ENCODE measurements at regions of chr6 and their contacts with region 1.

Region 1: GRCh38 chr6:167898673-167899311 is 72.1 kb downstream of the AFDN start:
- DNase-seq: peak in 3 of 14 experiments; percentile 25 to 36 (median 25)
- ATAC-seq: no peak
- H3K4me3 ChIP-seq: no peak overlapping the region
- H3K4me3 Mint-ChIP-seq: no peak overlapping the region
- H3K27ac ChIP-seq: no peak overlapping the region
- H3K27ac Mint-ChIP-seq: no peak overlapping the region
- H3K4me1 ChIP-seq: no peaks in the 10 kb centered on the region
- H3K4me1 Mint-ChIP-seq: no peaks in the 10 kb centered on the region
- H3K27me3 ChIP-seq: no peaks in the 10 kb centered on the region
- H3K27me3 Mint-ChIP-seq: no peaks in the 10 kb centered on the region
- CTCF ChIP-seq: peak; percentile 56

Region 2: GRCh38 chr6:166365221-166365620 is 1533.6 kb before region 1 on chr6:
- CTCF ChIA-PET with region 1: no interaction called
- POLR2A ChIA-PET with region 1: no interaction called
- intact Hi-C with region 1: no loop called
- DNase-seq: no peak
- ATAC-seq: no peak
- H3K4me3 ChIP-seq: no peak overlapping the region
- H3K4me3 Mint-ChIP-seq: no peak overlapping the region
- H3K27ac ChIP-seq: no peak overlapping the region
- H3K27ac Mint-ChIP-seq: no peak overlapping the region
- H3K4me1 ChIP-seq: no peaks in the 10 kb centered on the region
- H3K4me1 Mint-ChIP-seq: no peaks in the 10 kb centered on the region
- H3K27me3 ChIP-seq: no peaks in the 10 kb centered on the region
- H3K27me3 Mint-ChIP-seq: no peaks in the 10 kb centered on the region
- CTCF ChIP-seq: no peak

Region 3: DNA sequence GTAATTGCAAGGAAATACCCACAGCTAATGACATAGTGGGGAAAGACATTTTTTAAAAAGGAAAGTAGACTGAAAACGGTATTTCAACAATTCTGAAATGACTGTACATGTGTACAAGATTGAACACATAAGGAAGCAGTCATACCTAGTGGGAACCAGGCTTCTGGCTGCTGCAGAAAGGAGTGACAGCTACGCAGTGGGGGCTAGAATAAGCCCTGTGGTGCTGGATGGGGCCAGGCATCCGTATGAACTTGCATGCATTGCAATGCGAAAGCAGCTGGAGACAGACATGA is 686.1 kb before region 1 on chr6:
- CTCF ChIA-PET with region 1: no interaction called
- POLR2A ChIA-PET with region 1: no interaction called
- intact Hi-C with region 1: loop called in 1 of 2 experiments (anchors 10 kb)
- DNase-seq: no peak
- ATAC-seq: no peak
- H3K4me3 ChIP-seq: no peak overlapping the region
- H3K4me3 Mint-ChIP-seq: no peak overlapping the region
- H3K27ac ChIP-seq: no peak overlapping the region
- H3K27ac Mint-ChIP-seq: no peak overlapping the region
- H3K4me1 ChIP-seq: no peaks in the 10 kb centered on the region
- H3K4me1 Mint-ChIP-seq: no peaks in the 10 kb centered on the region
- H3K27me3 ChIP-seq: no peaks in the 10 kb centered on the region
- H3K27me3 Mint-ChIP-seq: no peaks in the 10 kb centered on the region
- CTCF ChIP-seq: no peak

Region 4: DNA sequence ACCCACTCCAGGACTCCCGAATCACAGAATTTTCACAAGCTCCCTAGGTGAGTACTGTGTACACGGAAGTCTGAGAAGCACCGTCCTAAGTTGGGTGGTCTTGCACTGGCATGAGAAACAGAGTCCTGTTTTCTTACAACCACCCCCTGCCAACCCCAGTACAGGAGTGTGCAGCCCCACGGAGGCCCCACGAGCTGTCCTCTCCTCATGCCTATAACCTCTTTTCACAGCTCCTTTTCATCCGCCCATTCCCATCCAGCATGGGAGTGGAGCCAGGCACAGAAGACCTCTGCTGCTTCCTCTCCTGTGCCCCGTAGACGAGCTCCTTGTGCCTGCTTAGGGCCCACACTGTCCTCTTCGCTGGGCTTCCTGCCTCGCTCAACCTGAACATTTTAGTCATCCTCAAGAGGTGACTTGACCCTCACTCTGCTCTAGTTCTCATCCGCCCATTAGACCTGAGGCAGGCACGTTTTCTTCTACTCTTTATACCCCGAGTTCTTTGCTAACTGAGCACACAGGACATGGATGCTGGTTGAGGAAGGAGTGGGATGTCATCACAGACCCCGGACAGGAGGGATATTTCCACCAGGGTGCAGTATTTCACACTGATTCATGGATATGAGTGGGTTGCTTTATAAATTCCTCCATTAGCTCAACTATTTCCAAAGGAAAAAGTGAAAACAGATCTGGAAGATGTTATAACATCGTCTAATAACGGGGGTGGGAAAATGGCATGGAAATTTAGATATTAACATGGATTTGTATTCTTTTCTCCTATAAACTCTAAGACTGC is 413.4 kb before region 1 on chr6:
- CTCF ChIA-PET with region 1: no interaction called
- POLR2A ChIA-PET with region 1: no interaction called
- intact Hi-C with region 1: loop called (anchors 2 to 5 kb)
- DNase-seq: peak in 2 of 14 experiments; percentile 8 to 11
- ATAC-seq: no peak
- H3K4me3 ChIP-seq: no peak overlapping the region
- H3K4me3 Mint-ChIP-seq: no peak overlapping the region
- H3K27ac ChIP-seq: no peak overlapping the region
- H3K27ac Mint-ChIP-seq: no peak overlapping the region
- H3K4me1 ChIP-seq: no peaks in the 10 kb centered on the region
- H3K4me1 Mint-ChIP-seq: no peaks in the 10 kb centered on the region
- H3K27me3 ChIP-seq: peaks cover 0 to 6% of the 10 kb centered on the region in 2 experiments
- H3K27me3 Mint-ChIP-seq: peaks cover 32% of the 10 kb centered on the region
- CTCF ChIP-seq: no peak

Measured in CD4-positive, alpha-beta T cell (primary cell).